Caco-2 (cell line): ENCODE measurements at regions of chr6 and their contacts with region 1.

Region 1: GRCh38 chr6:132279592-132280139 is 121.6 kb downstream of the MOXD1 start:
- DNase-seq: peak; percentile 57 to 75
- H3K4me3 ChIP-seq: peak overlapping the region; percentile 40
- H3K4me3 Mint-ChIP-seq: peak overlapping the region; percentile 70
- H3K27ac Mint-ChIP-seq: no peak overlapping the region
- H3K4me1 ChIP-seq: no peaks in the 10 kb centered on the region
- H3K4me1 Mint-ChIP-seq: no peaks in the 10 kb centered on the region
- H3K27me3 ChIP-seq: no peaks in the 10 kb centered on the region
- H3K27me3 Mint-ChIP-seq: peaks cover 10% of the 10 kb centered on the region
- CTCF ChIP-seq: peak; percentile 64 to 85

Region 2: GRCh38 chr6:131937703-131938631 is 341.7 kb before region 1 on chr6:
- CTCF ChIA-PET with region 1: no interaction called
- POLR2A ChIA-PET with region 1: no interaction called
- intact Hi-C with region 1: no loop called
- DNase-seq: no peak
- H3K4me3 ChIP-seq: no peak overlapping the region
- H3K4me3 Mint-ChIP-seq: no peak overlapping the region
- H3K27ac Mint-ChIP-seq: no peak overlapping the region
- H3K4me1 ChIP-seq: no peaks in the 10 kb centered on the region
- H3K4me1 Mint-ChIP-seq: peaks cover 6% of the 10 kb centered on the region
- H3K27me3 ChIP-seq: no peaks in the 10 kb centered on the region
- H3K27me3 Mint-ChIP-seq: no peaks in the 10 kb centered on the region
- CTCF ChIP-seq: no peak

Region 3: GRCh38 chr6:132391391-132392271 is 112.0 kb after region 1 on chr6:
- CTCF ChIA-PET with region 1: interaction called, 10 read pairs
- POLR2A ChIA-PET with region 1: no interaction called
- intact Hi-C with region 1: loop called (anchors 1 kb)
- DNase-seq: no peak
- H3K4me3 ChIP-seq: no peak overlapping the region
- H3K4me3 Mint-ChIP-seq: no peak overlapping the region
- H3K27ac Mint-ChIP-seq: no peak overlapping the region
- H3K4me1 ChIP-seq: no peaks in the 10 kb centered on the region
- H3K4me1 Mint-ChIP-seq: no peaks in the 10 kb centered on the region
- H3K27me3 ChIP-seq: no peaks in the 10 kb centered on the region
- H3K27me3 Mint-ChIP-seq: peaks cover 21% of the 10 kb centered on the region
- CTCF ChIP-seq: no peak